ENCODE measurements at regions of chr5 and their contacts with region 1.

Region 1: GRCh38 chr5:16690243-16690852 is 73.6 kb upstream of the RETREG1 start:
- DNase-seq: peak in 1 of 10 donors; percentile 49
- H3K4me3 ChIP-seq: peak overlapping the region in 1 of 59 donors; percentile 3
- H3K27ac ChIP-seq: peak overlapping the region in 52 of 59 donors; percentile 1 to 82 (median 62)
- H3K27me3 ChIP-seq: no peaks in the 10 kb centered on the region
- CTCF ChIP-seq: peak; percentile 52 to 86 (median 73)

Region 2: DNA sequence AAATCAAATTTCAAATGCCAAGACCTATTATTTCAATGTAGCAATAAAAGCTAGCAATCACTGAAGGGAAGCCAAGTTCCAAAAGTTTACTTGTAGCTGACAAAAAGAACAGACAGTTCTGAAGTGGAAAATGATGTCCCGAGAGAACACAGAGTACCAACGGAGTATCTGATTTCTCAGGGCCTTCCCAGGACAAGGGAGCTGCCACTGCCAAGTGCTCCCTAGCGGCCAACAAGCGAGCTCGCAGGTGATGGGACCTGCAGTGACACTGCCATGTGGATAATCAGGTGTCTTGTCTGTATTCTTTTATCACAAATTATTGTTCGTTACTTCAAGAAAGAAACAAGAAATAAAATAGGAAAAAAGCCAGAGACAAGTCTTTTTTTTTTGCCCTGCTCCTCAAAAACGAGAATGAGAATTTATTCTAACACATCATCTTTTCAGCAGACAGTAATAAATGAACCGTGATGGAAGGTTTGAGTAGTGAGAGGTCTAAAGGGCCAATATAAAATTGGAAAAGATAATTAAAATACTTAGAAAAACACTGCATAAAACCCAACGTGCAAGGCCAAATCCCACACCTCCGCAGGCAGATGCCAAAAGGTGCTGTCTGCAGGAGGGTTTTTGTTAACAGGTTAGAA is 86.4 kb after region 1 on chr5:
- intact Hi-C with region 1: loop called in 1 of 2 experiments (anchors 5 kb)
- DNase-seq: peak in 1 of 10 donors; percentile 23
- H3K4me3 ChIP-seq: no peak overlapping the region
- H3K27ac ChIP-seq: peak overlapping the region in 1 of 59 donors; percentile 41
- H3K27me3 ChIP-seq: no peaks in the 10 kb centered on the region
- CTCF ChIP-seq: peak in 49 of 56 donors; percentile 22 to 69 (median 48)

Region 3: GRCh38 chr5:17056056-17056690 is 365.8 kb after region 1 on chr5:
- intact Hi-C with region 1: no loop called
- DNase-seq: peak in 3 of 10 donors; percentile 36 to 63 (median 42)
- H3K4me3 ChIP-seq: peak overlapping the region in 1 of 59 donors; percentile 9
- H3K27ac ChIP-seq: peak overlapping the region in 1 of 59 donors; percentile 30
- H3K27me3 ChIP-seq: no peaks in the 10 kb centered on the region
- CTCF ChIP-seq: no peak